OCI-LY7 (cell line): ENCODE measurements at regions of chr11 and their contacts with region 1.

Region 1: GRCh38 chr11:119236490-119236889 is 30.4 kb downstream of the CBL start:
- DNase-seq: no peak
- H3K4me3 ChIP-seq: no peak overlapping the region
- H3K27ac ChIP-seq: peak overlapping the region; percentile 43
- H3K4me1 ChIP-seq: peaks cover 50% of the 10 kb centered on the region
- CTCF ChIP-seq: no peak

Region 2: GRCh38 chr11:119222308-119222707 is 14.2 kb before region 1 on chr11:
- CTCF ChIA-PET with region 1: no interaction called
- POLR2A ChIA-PET with region 1: interaction called, 10 read pairs
- intact Hi-C with region 1: no loop called
- DNase-seq: no peak
- H3K4me3 ChIP-seq: no peak overlapping the region
- H3K27ac ChIP-seq: no peak overlapping the region
- H3K4me1 ChIP-seq: peaks cover 7% of the 10 kb centered on the region
- CTCF ChIP-seq: no peak

Region 3: DNA sequence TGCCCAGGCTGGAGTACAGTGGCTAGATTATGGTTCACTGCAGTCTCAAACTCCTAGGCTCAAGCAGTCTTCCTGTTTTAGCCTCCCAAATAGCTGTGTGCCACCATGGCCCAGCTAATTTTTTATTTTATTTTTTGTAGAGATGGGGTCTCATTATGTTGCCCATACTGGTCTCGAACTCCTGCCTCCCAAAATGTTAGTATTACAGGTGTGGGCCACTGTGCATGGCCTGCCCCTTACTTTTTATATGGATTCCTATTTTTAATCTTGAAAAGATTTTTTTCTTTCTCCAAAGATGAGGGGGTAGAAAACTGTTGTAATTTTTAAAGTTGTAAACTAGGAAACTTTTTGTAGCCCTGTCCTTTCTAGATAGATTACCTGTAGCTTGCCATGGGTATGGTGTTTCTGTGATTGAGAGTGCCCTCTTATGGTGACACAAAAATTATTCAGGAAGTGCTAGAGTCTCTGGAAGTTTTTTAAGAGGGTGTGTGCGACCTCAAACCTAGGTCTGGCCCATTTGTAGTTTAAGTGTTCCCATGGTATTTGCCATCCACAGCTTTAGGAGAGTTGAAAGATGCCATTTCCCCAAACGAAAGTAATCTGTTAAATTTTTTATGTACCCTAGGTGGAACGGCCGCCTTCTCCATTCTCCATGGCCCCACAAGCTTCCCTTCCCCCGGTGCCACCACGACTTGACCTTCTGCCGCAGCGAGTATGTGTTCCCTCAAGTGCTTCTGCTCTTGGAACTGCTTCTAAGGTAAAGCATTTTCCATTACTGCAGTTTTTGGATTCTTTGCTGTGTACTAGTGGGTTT is 48.1 kb after region 1 on chr11:
- CTCF ChIA-PET with region 1: no interaction called
- POLR2A ChIA-PET with region 1: no interaction called
- intact Hi-C with region 1: loop called (anchors 5 kb)
- DNase-seq: peak; percentile 74
- H3K4me3 ChIP-seq: no peak overlapping the region
- H3K27ac ChIP-seq: no peak overlapping the region
- H3K4me1 ChIP-seq: peaks cover 8% of the 10 kb centered on the region
- CTCF ChIP-seq: peak; percentile 94

Region 4: DNA sequence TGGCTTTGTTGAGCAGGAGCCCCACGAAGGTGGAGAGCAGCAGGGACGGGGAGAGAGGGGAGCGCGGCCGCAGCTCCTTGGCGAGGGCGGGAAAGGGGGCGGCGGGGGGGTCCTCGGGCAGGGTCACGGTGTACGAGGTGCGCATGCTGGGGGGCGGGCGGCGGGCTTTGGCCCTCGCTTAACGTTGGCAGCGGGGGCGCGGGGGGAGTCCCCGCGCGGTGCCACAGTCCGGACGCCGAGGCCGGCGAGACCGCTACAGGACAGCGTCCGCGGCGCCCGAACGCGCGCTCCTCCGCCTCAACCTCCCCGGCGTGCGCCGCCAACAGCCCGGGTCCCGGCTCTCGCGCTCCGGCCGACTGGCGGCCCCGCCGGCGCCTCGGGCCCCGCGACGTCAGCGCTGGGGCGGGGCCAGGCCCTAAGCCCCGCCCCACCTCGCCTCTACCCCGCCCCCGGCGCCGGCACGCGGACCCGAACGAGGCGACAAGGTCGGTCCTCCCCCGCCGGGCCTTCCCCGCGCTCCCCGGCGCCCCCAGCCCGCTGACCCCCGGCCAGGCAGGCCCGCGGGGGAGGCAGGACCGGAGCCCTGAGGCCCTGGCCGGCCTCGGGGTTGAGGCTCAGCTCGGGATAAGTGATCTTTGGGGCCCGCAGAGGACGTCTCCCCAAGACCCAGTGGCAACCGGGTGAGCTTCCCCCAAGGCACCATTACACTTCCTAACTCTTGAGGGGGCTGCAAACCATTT is 127.5 kb after region 1 on chr11:
- CTCF ChIA-PET with region 1: no interaction called
- POLR2A ChIA-PET with region 1: interaction called, 4 read pairs
- intact Hi-C with region 1: loop called (anchors 5 kb)
- DNase-seq: peak; percentile 83
- H3K4me3 ChIP-seq: peak overlapping the region; percentile 78
- H3K27ac ChIP-seq: peak overlapping the region; percentile 83
- H3K4me1 ChIP-seq: peaks cover 86% of the 10 kb centered on the region
- CTCF ChIP-seq: peak; percentile 18; the same call in 1 of the 2 replicates